ENCODE measurements at regions of chr1 and their contacts with region 1.

Region 1: DNA sequence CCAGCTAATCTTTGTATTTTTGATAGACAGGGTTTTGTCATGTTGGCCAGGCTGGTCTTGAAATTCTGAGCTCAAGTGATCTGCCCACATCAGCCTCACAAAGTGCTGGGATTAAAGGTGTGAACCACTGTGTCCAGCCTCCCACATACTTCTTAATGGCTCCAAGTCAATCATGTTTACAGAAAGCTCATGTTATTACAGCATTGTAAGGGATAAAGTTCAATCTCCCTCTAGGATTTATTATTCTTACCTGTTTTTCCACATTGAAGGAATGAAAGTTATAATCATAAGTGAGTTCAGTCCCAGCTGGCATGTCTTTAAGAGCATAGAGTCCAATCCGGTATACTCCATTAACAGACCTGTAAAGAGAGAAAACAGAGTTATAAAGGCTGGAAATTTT is 39.4 kb downstream of the RUSC1 start:
- DNase-seq: no peak
- H3K4me3 ChIP-seq: no peak overlapping the region
- H3K27ac ChIP-seq: no peak overlapping the region
- H3K4me1 ChIP-seq: no peaks in the 10 kb centered on the region
- H3K27me3 ChIP-seq: no peaks in the 10 kb centered on the region
- CTCF ChIP-seq: no peak

Region 2: DNA sequence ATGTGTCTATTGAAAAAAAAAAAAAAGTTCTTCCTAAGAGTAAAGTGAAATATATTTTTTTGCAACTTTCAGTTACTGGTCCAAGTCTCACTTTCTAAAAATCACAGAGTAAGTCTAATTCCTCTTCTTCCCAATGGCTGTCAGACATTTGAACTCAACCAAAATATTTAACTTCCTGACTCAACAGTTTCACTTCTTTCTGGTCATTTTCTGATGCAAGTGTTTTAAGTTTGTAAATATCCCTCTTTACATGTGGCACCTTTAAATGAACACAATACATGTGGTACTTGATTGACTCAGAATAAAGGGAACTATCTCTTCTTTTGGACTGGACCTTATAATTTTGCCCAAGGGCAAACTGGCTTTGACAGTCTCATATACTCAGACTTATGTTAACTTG is 125.9 kb after region 1 on chr1:
- CTCF ChIA-PET with region 1: no interaction called
- POLR2A ChIA-PET with region 1: no interaction called
- intact Hi-C with region 1: loop called (anchors 10 kb)
- DNase-seq: no peak
- H3K4me3 ChIP-seq: no peak overlapping the region
- H3K27ac ChIP-seq: no peak overlapping the region; the same call in 1 of the 2 replicates
- H3K4me1 ChIP-seq: no peaks in the 10 kb centered on the region
- H3K27me3 ChIP-seq: no peaks in the 10 kb centered on the region
- CTCF ChIP-seq: no peak

Measured in PC-9 (cell line).